ENCODE measurements at regions of chr5 and their contacts with region 1.

Region 1: DNA sequence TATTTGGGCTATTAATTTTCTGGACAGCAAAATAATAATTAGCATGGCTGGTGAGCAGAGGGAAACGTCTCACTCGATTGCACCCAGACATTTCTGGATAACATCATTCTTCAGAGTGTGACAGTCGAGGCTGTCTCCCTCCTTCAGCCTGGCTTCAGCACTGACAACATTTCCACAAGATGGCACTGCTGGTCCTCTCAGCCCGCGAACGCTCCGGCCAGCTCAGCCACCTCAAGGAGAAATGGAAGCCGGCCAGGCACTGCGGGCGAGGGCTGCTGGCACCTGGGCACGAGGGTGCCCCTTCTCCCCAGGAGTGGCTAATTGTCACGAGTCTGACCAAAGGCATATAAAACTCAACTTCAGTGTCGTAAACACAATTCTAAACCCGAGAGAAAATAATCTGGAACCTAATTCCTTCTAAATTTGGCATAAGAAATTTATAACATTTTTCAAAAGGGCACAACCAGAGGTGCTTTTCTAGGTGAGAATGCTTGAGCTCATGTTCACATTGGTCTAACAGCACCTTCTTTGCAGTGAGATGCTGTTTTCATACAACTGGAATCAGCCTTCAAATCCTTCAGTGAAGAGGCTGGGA is 65.9 kb downstream of the DAP start:
- DNase-seq: peak; percentile 75 to 84 (median 77)
- ATAC-seq: peak; percentile 81 to 92 (median 89)
- H3K4me3 ChIP-seq: no peak overlapping the region
- H3K27ac ChIP-seq: no peak overlapping the region
- H3K4me1 ChIP-seq: peaks cover 0 to 13% (median 9%) of the 10 kb centered on the region in 12 donors
- H3K27me3 ChIP-seq: no peaks in the 10 kb centered on the region
- CTCF ChIP-seq: peak; percentile 62 to 88 (median 76)
- POLR2A ChIP-seq: no peak

Region 2: DNA sequence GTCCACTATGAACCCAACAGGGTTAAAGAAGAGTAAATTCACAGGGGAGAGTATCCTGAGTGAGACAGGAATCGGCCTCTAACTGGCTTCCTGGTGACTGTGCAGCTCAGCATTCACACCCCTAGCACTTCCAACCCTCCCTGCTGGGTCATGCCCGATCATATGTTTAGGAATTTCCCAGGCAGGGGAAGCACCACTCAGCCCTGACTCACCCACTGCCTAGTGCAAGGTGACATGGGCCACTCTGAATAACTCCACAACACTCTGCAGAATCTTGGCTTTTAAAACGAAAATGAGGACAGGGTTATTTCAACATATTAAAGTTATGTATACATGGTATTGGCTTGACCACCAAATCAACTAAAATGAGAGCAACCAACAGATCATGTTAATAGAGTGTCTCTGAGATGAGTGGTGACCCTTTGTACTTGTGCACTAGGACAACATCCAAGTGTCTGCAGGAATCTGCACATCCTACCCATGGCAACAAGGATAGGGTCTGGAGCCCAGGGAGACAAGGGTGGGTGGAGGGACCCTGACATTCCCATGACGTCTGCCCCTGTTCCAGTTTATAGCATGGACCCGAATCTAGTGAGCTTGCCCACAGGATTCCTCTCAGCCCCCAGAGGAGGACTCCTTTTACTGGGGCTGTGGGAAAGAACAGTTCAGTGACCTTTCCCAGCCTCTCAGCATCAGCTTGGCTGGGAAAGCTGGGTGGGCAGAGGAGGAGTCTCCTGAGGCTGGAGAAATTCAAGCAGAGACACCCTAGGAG is 1635.0 kb before region 1 on chr5:
- intact Hi-C with region 1: no loop called
- DNase-seq: peak in 4 of 5 donors; percentile 41 to 55 (median 48)
- ATAC-seq: peak; percentile 63 to 91 (median 88)
- H3K4me3 ChIP-seq: no peak overlapping the region
- H3K27ac ChIP-seq: peak overlapping the region in 9 of 12 donors; percentile 8 to 70 (median 44)
- H3K4me1 ChIP-seq: peaks cover 0 to 23% (median 2%) of the 10 kb centered on the region in 12 donors
- H3K27me3 ChIP-seq: no peaks in the 10 kb centered on the region
- CTCF ChIP-seq: no peak
- POLR2A ChIP-seq: no peak

Region 3: GRCh38 chr5:10856683-10857337 is 161.7 kb after region 1 on chr5:
- intact Hi-C with region 1: loop called in 8 of 10 experiments (anchors 2 to 10 kb)
- DNase-seq: peak; percentile 40 to 70 (median 52)
- ATAC-seq: peak in 3 of 4 donors; percentile 36 to 77 (median 61)
- H3K4me3 ChIP-seq: peak overlapping the region in 5 of 12 donors; percentile 0 to 38 (median 6)
- H3K27ac ChIP-seq: no peak overlapping the region
- H3K4me1 ChIP-seq: peaks cover 0 to 33% (median 7%) of the 10 kb centered on the region in 12 donors
- H3K27me3 ChIP-seq: peaks cover 0 to 9% (median 0%) of the 10 kb centered on the region in 9 donors
- CTCF ChIP-seq: peak; percentile 69 to 85 (median 78)
- POLR2A ChIP-seq: no peak

Region 4: GRCh38 chr5:11110128-11110527 is 415.0 kb after region 1 on chr5:
- intact Hi-C with region 1: loop called in 1 of 10 experiments (anchors 5 kb)
- DNase-seq: no peak
- ATAC-seq: peak in 1 of 4 donors; percentile 55
- H3K4me3 ChIP-seq: no peak overlapping the region
- H3K27ac ChIP-seq: no peak overlapping the region
- H3K4me1 ChIP-seq: no peaks in the 10 kb centered on the region
- H3K27me3 ChIP-seq: no peaks in the 10 kb centered on the region
- CTCF ChIP-seq: peak in 3 of 12 donors; percentile 20 to 31 (median 20)
- POLR2A ChIP-seq: no peak

Region 5: GRCh38 chr5:11619339-11620024 is 924.3 kb after region 1 on chr5:
- intact Hi-C with region 1: loop called in 2 of 10 experiments (anchors 10 kb)
- DNase-seq: no peak
- ATAC-seq: peak in 3 of 4 donors; percentile 50 to 79 (median 65)
- H3K4me3 ChIP-seq: no peak overlapping the region
- H3K27ac ChIP-seq: no peak overlapping the region
- H3K4me1 ChIP-seq: peaks cover 0 to 5% (median 0%) of the 10 kb centered on the region in 12 donors
- H3K27me3 ChIP-seq: no peaks in the 10 kb centered on the region
- CTCF ChIP-seq: peak in 10 of 12 donors; percentile 13 to 54 (median 40)
- POLR2A ChIP-seq: no peak

Region 6: DNA sequence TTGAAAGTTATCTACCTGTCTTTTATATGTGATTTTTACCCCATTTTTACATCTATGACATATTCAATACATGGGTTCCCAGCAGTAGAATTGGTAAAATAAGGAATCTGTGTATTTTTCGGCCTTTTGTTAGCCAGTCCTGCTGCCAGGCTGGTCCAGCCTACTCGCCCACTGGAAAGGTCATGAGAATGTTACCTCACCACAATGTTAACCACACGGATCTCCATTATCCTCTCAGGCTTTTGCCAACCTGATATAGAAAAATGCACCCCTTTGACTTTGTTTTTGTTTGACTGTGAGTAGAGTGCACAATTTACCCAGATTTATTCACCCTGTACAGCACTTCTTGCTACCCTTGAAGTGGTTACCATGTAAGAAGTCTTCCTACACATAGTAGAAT is 1041.9 kb after region 1 on chr5:
- intact Hi-C with region 1: no loop called
- DNase-seq: no peak
- ATAC-seq: no peak
- H3K4me3 ChIP-seq: no peak overlapping the region
- H3K27ac ChIP-seq: no peak overlapping the region
- H3K4me1 ChIP-seq: no peaks in the 10 kb centered on the region
- H3K27me3 ChIP-seq: no peaks in the 10 kb centered on the region
- CTCF ChIP-seq: no peak
- POLR2A ChIP-seq: no peak

Region 7: DNA sequence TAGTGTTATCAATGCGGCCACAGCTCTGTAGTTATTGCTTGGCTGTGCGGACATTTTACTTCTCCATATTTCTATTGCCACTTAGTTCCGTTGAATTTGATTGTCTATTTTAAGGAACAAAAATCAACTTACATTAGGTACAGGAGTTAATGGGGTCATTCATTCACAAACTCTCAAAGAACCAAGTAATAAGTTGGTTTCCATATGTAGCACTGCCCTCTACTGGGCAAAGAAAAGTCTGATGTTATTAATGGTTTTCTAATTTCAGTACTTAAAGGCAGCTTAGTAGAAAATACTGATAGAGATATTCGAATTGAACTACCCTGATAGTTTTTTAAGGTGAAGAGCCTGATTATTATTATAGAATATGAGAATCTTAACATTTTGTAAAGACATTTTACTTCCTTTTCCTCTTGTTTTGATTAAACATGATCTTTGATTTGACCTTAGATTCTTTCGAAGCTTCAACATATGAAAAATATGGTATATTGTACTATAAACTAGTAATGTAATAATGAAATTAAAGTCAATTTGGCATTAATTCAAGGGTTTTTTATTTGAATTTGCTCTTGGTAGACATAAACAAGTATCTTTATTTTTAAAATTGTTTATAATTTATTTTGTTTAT is 1328.6 kb after region 1 on chr5:
- intact Hi-C with region 1: loop called in 3 of 10 experiments (anchors 5 to 10 kb)
- DNase-seq: no peak
- ATAC-seq: no peak
- H3K4me3 ChIP-seq: no peak overlapping the region
- H3K27ac ChIP-seq: no peak overlapping the region
- H3K4me1 ChIP-seq: no peaks in the 10 kb centered on the region
- H3K27me3 ChIP-seq: no peaks in the 10 kb centered on the region
- CTCF ChIP-seq: peak; percentile 35 to 68 (median 50)
- POLR2A ChIP-seq: no peak

Measured in heart left ventricle (tissue), 16 donors.